HEK293T (cell line): ENCODE measurements at regions of chr7 and their contacts with region 1.

Region 1: GRCh38 chr7:114426382-114427223 is 12.0 kb downstream of the FOXP2 start:
- DNase-seq: no peak

Region 2: GRCh38 chr7:114414156-114415063 is 12.2 kb before region 1 on chr7 and contains the start of gene FOXP2:
- CTCF ChIA-PET with region 1: interaction called, 11 read pairs
- POLR2A ChIA-PET with region 1: no interaction called
- DNase-seq: no peak

Region 3: GRCh38 chr7:114450431-114450830 is 23.8 kb after region 1 on chr7:
- CTCF ChIA-PET with region 1: interaction called, 10 read pairs
- POLR2A ChIA-PET with region 1: no interaction called
- DNase-seq: no peak

Region 4: GRCh38 chr7:114539575-114539974 is 113.0 kb after region 1 on chr7:
- CTCF ChIA-PET with region 1: interaction called, 11 read pairs
- POLR2A ChIA-PET with region 1: no interaction called
- DNase-seq: peak; percentile 10